IMR-90 (cell line): ENCODE measurements at regions of chr14 and their contacts with region 1.

Region 1: GRCh38 chr14:76647697-76648298 is 113.5 kb upstream of the VASH1 start:
- DNase-seq: peak; percentile 59
- ATAC-seq: peak; percentile 93
- H3K4me3 ChIP-seq: no peak overlapping the region
- H3K27ac ChIP-seq: no peak overlapping the region
- H3K4me1 ChIP-seq: no peaks in the 10 kb centered on the region
- H3K27me3 ChIP-seq: no peaks in the 10 kb centered on the region; the same call in 1 of the 2 replicates
- CTCF ChIP-seq: peak; percentile 61
- POLR2A ChIP-seq: no peak
- RAD21 ChIP-seq: peak; percentile 58

Region 2: DNA sequence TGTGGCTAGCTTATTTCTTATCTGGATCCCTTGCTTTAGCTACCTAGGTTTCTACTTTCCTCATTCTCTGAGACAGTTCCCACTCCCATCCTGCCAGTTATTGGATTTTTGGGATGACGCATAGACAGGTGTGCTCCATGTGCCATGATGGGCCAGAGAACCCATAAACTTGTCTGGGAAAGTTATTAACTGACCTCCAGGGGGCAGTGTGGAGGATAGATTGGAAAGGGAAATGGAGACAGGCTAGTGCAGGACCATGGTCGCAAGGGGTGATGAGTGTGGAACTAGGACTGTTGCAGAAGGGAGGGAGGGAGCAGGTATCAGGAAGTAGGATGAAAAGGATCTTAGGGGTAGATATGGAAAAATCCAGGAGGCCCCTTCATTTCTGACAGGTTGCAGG is 191.6 kb before region 1 on chr14:
- CTCF ChIA-PET with region 1: no interaction called
- POLR2A ChIA-PET with region 1: no interaction called
- dilution Hi-C with region 1: no loop called
- in situ Hi-C with region 1: no loop called
- intact Hi-C with region 1: loop called (anchors 1 kb)
- DNase-seq: peak; percentile 8
- ATAC-seq: no peak; the same call in 1 of the 2 replicates
- H3K4me3 ChIP-seq: no peak overlapping the region
- H3K27ac ChIP-seq: no peak overlapping the region
- H3K4me1 ChIP-seq: no peaks in the 10 kb centered on the region
- H3K27me3 ChIP-seq: peaks cover 2% of the 10 kb centered on the region; the same call in 1 of the 2 replicates
- CTCF ChIP-seq: peak; percentile 27
- POLR2A ChIP-seq: no peak
- RAD21 ChIP-seq: 0 out of 2 replicates have a peak, but pooled peaks have one; percentile 3

Region 3: DNA sequence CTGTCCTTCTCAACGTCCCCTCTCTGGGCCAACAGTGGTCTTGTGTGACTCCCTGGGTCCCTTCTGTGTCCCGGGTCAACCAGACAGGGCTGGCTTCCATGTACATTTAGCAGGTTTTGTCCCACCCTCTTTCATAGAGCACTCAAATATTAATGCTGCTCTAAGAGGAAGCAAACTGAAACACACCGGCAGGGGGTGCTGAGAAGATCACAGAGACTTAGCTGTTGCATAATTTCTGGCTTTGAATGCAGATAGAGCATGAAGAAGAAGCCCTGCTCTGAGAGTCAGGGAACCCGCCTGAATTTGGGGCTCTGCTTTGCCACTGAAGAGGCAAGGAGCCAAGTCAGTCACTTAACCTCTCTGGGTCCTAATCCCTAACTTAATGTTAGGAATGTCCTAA is 133.2 kb before region 1 on chr14:
- CTCF ChIA-PET with region 1: no interaction called
- POLR2A ChIA-PET with region 1: no interaction called
- dilution Hi-C with region 1: no loop called
- in situ Hi-C with region 1: no loop called
- intact Hi-C with region 1: loop called (anchors 10 kb)
- DNase-seq: peak; percentile 2
- ATAC-seq: no peak
- H3K4me3 ChIP-seq: no peak overlapping the region
- H3K27ac ChIP-seq: no peak overlapping the region
- H3K4me1 ChIP-seq: no peaks in the 10 kb centered on the region
- H3K27me3 ChIP-seq: no peaks in the 10 kb centered on the region; the same call in 1 of the 2 replicates
- CTCF ChIP-seq: 0 out of 2 replicates have a peak, but pooled peaks have one; percentile 12
- POLR2A ChIP-seq: no peak
- RAD21 ChIP-seq: no peak